AG04450 (cell line): ENCODE measurements at regions of chr7 and their contacts with region 1.

Region 1: DNA sequence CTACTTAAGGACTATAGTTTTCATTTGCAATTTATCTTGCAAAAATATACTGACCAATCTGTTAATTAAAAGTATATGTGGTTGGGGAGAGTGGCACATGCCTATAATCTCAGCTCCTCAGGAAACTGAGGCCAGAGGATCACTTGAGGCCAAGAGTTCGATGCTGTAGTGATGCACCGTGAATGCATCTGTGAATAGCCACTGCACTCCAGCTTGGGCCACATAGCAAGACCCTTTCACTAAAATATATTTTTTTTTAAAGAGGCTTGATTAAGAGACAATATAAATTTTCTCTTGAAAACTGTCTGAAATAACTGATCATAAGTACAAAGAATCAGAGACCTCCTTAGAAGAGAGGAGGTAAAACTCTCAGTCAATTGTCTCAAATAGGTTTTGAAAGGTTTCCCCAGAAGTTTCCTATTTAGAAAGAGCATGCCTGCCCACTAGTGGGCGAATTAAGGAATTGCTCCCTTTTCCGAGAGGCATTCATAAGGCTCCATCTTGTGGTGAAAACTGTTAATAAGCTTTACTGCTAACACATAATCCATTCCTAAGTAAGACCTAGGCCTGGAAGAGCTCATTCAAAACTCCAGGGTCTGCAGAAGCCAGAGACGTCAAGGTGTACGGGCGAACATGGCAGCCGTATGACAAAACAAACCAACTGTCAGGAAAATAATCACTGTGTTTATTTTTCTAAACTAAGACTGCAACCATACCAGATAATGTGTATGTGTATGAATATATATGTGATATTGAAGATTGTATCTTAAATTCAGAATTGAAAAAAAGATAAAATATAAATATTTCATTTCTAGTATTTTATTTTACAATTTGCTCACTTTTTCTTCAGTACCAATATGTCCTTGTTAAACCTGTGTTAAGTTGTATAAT is 6.8 kb upstream of the TAS2R40 start:
- DNase-seq: peak; percentile 71
- H3K4me3 ChIP-seq: no peak overlapping the region
- H3K27ac ChIP-seq: no peak overlapping the region
- H3K27me3 ChIP-seq: no peaks in the 10 kb centered on the region
- CTCF ChIP-seq: peak; percentile 100

Region 2: DNA sequence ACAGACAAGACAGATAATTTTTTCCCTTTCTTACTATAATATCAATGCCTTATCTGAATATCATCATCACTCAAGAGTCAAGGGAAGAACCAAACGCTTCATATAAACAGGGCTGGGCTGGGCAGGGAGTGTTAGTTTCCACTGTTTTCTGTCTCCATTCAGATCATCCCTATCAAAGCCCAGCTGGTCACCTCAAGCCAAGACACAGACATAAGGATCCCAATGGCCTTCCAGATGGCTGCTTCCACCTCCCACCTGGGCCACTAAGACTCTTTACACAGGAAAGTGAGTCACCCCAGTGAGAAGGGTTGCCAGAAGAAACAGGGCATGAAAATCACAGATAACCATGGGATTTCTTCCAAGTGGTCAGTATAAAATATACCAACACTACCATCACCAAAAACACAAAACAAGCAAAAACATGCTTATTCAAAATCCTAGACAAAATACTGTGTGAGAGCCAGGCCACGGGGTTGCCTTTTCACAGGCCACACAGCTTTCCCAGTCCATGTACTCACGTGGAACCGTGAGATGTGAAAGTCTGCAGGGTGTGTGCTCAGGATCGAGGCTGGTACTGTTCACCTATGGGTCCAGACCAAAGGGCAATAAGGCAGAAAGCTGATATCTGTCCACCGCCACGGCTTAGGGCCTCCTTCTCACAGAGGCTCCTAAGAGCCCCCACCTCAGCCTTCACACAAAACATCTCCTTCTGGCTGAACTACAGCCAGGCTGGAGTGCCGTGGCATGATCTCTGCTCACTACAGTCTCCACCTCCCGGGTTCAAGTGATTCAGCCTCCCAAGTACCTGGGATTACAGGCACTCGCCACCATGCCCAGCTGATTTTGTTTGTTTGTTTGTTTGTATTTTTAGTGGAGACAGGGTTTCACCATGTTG is 460.1 kb before region 1 on chr7:
- CTCF ChIA-PET with region 1: no interaction called
- POLR2A ChIA-PET with region 1: no interaction called
- DNase-seq: no peak
- H3K4me3 ChIP-seq: no peak overlapping the region
- H3K27ac ChIP-seq: no peak overlapping the region
- H3K27me3 ChIP-seq: no peaks in the 10 kb centered on the region
- CTCF ChIP-seq: no peak

Region 3: DNA sequence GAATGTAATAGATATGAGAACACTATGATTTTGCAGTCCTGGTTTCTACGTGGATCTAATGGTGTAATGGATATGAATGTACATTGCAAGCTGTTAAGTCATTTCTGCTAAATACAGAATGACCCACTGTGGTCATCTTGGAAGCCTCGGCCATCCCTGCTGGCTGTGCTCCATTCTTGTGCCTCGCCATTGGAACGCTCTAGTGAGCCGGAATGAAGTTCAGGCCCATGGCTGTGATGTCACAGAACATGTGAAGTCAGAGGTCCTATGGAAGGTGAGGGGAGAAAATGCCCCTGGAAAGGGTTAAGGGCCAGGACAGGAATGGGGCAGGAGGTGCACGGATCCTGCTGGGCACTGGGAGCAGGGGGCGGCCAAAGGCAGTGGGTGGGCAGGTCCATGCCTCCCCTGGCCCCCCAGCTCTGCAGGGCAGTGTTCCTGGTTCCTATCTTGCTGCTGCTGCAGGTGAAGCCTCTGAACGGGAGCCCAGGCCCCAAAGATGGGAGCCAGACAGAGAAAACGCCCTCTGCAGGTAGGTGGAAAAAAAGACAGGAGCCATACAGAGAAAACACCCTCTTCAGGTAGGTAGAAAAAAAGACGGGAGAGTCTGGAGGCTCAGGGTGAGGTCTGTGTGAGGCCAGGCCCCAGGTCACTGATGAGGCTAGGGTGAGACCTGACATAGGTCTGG is 275.7 kb before region 1 on chr7 and contains the start of gene LLCFC1:
- CTCF ChIA-PET with region 1: no interaction called
- POLR2A ChIA-PET with region 1: no interaction called
- DNase-seq: no peak
- H3K4me3 ChIP-seq: no peak within 1 kb of the TSS
- H3K27ac ChIP-seq: no peak within 1 kb of the TSS
- H3K27me3 ChIP-seq: no peaks in the 10 kb centered on the region
- CTCF ChIP-seq: no peak
- polyA plus RNA-seq, gene LLCFC1: not detected in 2 replicates

Region 4: GRCh38 chr7:143008007-143008901 is 206.8 kb before region 1 on chr7:
- CTCF ChIA-PET with region 1: interaction called, 406 read pairs
- POLR2A ChIA-PET with region 1: interaction called, 3 read pairs
- DNase-seq: peak; percentile 6
- H3K4me3 ChIP-seq: no peak overlapping the region
- H3K27ac ChIP-seq: no peak overlapping the region
- H3K27me3 ChIP-seq: no peaks in the 10 kb centered on the region
- CTCF ChIP-seq: peak; percentile 94

Region 5: DNA sequence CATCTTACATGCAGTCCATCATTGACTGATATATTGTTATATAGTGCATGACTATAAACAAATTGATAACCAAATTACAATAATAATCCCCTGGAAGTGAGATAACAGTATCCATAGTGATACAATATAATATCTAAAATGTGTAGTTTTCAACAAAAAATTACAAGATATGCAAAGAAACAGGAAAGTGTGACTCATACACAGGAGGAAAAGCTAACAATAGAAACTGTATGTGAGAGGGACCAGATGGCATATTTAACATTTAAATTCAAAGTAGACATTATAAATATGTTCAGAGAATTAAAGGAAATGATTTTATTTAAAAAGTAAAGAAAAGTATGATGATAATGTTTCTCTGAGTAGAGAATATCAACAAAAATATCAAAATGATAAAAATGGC is 196.1 kb before region 1 on chr7:
- CTCF ChIA-PET with region 1: interaction called, 64 read pairs
- POLR2A ChIA-PET with region 1: no interaction called
- DNase-seq: no peak
- H3K4me3 ChIP-seq: no peak overlapping the region
- H3K27ac ChIP-seq: no peak overlapping the region
- H3K27me3 ChIP-seq: no peaks in the 10 kb centered on the region
- CTCF ChIP-seq: no peak

Region 6: DNA sequence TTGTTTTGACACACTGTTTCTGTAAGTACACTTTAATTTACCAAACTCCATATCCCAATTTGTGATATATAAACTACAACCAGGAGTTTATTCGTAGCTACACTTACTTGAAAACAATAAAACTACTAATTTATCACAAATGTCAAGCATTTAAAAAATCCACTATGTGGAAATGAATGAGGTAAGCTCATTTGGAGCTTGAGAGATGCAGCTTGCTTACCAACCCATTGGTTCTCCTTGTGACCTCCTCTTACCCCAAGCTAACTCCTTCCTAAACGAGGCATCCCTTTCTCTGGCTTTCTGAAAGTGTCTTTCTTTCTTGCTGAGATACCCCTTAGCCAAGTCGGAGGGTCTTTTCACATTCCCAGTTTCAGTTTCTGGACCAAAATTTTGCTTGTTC is 160.4 kb before region 1 on chr7:
- CTCF ChIA-PET with region 1: no interaction called
- POLR2A ChIA-PET with region 1: no interaction called
- DNase-seq: no peak
- H3K4me3 ChIP-seq: no peak overlapping the region
- H3K27ac ChIP-seq: no peak overlapping the region
- H3K27me3 ChIP-seq: no peaks in the 10 kb centered on the region
- CTCF ChIP-seq: no peak

Region 7: DNA sequence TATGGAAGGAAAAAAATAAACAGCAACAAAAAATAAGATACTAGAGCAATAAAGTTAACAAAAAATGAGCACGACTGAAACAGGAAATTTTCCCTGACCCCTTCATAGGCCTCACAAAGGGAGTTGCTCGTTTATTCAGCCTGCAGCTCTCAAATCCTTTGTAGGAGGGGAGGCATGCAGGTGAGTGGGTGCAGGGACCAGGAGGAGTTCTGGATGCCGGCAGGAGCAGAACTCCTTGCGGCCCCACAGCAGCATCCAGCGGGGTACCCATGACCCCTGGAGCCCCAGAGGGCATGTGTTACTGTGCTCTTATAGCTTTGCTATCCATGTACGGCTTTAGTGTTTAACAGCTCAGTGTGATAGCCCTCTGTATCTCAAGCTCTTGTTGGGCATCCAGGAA is 26.0 kb before region 1 on chr7:
- CTCF ChIA-PET with region 1: interaction called, 32 read pairs
- POLR2A ChIA-PET with region 1: no interaction called
- DNase-seq: no peak
- H3K4me3 ChIP-seq: no peak overlapping the region
- H3K27ac ChIP-seq: no peak overlapping the region
- H3K27me3 ChIP-seq: no peaks in the 10 kb centered on the region
- CTCF ChIP-seq: no peak

Region 8: DNA sequence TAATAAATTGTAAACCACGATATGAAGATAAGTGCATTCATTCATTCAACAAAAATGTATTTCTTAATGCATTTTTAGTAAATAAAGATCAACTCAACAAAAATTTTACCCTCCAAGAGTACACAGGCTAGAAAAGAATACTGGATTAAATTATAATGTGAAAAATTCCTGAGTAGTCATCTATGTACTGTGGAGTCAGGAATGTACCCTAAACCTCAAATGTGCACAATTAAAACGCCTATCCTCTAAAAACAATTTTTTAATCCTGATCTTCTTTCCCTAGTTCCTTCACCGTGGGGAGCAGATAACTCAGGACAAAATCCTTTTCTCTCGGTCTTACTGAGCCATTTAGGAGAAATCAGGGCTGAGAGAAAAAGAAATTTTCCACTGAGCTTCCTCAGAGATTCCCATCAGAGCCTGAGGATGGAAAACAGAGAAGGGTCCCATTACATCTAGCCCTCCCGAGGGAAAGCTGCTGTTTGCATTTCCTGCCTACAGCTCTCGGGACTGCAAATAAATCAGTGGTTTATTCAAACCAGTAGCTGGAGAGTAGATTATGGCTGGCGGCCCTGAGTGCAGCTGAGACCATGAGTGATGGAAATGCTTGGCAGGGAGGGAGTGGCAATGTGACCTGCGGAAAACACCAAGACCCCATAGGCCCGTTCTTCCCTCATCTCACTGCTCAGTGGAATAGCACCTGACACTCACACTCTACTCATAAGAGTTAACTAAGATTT is 14.2 kb after region 1 on chr7:
- CTCF ChIA-PET with region 1: interaction called, 32 read pairs
- POLR2A ChIA-PET with region 1: no interaction called
- DNase-seq: no peak
- H3K4me3 ChIP-seq: no peak overlapping the region
- H3K27ac ChIP-seq: no peak overlapping the region
- H3K27me3 ChIP-seq: peaks cover 2% of the 10 kb centered on the region
- CTCF ChIP-seq: no peak